Activated CD8-positive, alpha-beta memory T cell treated with anti-CD3 and anti-CD28 coated beads, Interleukin-2, amount 10 ng/mL, durations not matched to agents 7 days and 5 days (primary cell): ENCODE measurements at regions of chr14 and their contacts with region 1.

Region 1: GRCh38 chr14:97978341-97978740 is 1181.2 kb downstream of the VRK1 start:
- DNase-seq: peak; percentile 88
- ATAC-seq: peak; percentile 89
- H3K4me3 Mint-ChIP-seq: peak overlapping the region; percentile 84
- H3K27ac Mint-ChIP-seq: peak overlapping the region; percentile 95
- H3K4me1 Mint-ChIP-seq: peaks cover 48% of the 10 kb centered on the region
- H3K27me3 Mint-ChIP-seq: no peaks in the 10 kb centered on the region

Region 2: GRCh38 chr14:97707603-97708002 is 270.7 kb before region 1 on chr14:
- CTCF ChIA-PET with region 1: interaction called, 23 read pairs
- DNase-seq: peak; percentile 80
- ATAC-seq: peak; percentile 63
- H3K4me3 Mint-ChIP-seq: peak overlapping the region; percentile 48
- H3K27ac Mint-ChIP-seq: peak overlapping the region; percentile 94
- H3K4me1 Mint-ChIP-seq: peaks cover 88% of the 10 kb centered on the region
- H3K27me3 Mint-ChIP-seq: no peaks in the 10 kb centered on the region

Region 3: GRCh38 chr14:97930166-97930565 is 48.2 kb before region 1 on chr14:
- CTCF ChIA-PET with region 1: no interaction called
- DNase-seq: no peak
- ATAC-seq: no peak
- H3K4me3 Mint-ChIP-seq: no peak overlapping the region
- H3K27ac Mint-ChIP-seq: no peak overlapping the region
- H3K4me1 Mint-ChIP-seq: peaks cover 23% of the 10 kb centered on the region
- H3K27me3 Mint-ChIP-seq: peaks cover 14% of the 10 kb centered on the region

Region 4: GRCh38 chr14:97995531-97995930 is 17.2 kb after region 1 on chr14:
- CTCF ChIA-PET with region 1: interaction called, 12 read pairs
- DNase-seq: no peak
- ATAC-seq: no peak
- H3K4me3 Mint-ChIP-seq: no peak overlapping the region
- H3K27ac Mint-ChIP-seq: peak overlapping the region; percentile 98
- H3K4me1 Mint-ChIP-seq: peaks cover 31% of the 10 kb centered on the region
- H3K27me3 Mint-ChIP-seq: no peaks in the 10 kb centered on the region

Region 5: GRCh38 chr14:98006008-98006407 is 27.7 kb after region 1 on chr14:
- CTCF ChIA-PET with region 1: interaction called, 13 read pairs
- DNase-seq: no peak
- ATAC-seq: no peak
- H3K4me3 Mint-ChIP-seq: no peak overlapping the region
- H3K27ac Mint-ChIP-seq: no peak overlapping the region
- H3K4me1 Mint-ChIP-seq: peaks cover 16% of the 10 kb centered on the region
- H3K27me3 Mint-ChIP-seq: no peaks in the 10 kb centered on the region

Region 6: GRCh38 chr14:98018628-98019027 is 40.3 kb after region 1 on chr14:
- CTCF ChIA-PET with region 1: interaction called, 10 read pairs
- DNase-seq: peak; percentile 73
- ATAC-seq: peak; percentile 86
- H3K4me3 Mint-ChIP-seq: no peak overlapping the region
- H3K27ac Mint-ChIP-seq: peak overlapping the region; percentile 74
- H3K4me1 Mint-ChIP-seq: peaks cover 43% of the 10 kb centered on the region
- H3K27me3 Mint-ChIP-seq: no peaks in the 10 kb centered on the region

Region 7: GRCh38 chr14:98059106-98059505 is 80.8 kb after region 1 on chr14:
- CTCF ChIA-PET with region 1: no interaction called
- DNase-seq: no peak
- ATAC-seq: no peak
- H3K4me3 Mint-ChIP-seq: no peak overlapping the region
- H3K27ac Mint-ChIP-seq: no peak overlapping the region
- H3K4me1 Mint-ChIP-seq: no peaks in the 10 kb centered on the region
- H3K27me3 Mint-ChIP-seq: no peaks in the 10 kb centered on the region

Region 8: GRCh38 chr14:98138666-98139065 is 160.3 kb after region 1 on chr14:
- CTCF ChIA-PET with region 1: interaction called, 46 read pairs
- DNase-seq: peak; percentile 76
- ATAC-seq: peak; percentile 82
- H3K4me3 Mint-ChIP-seq: peak overlapping the region; percentile 7
- H3K27ac Mint-ChIP-seq: peak overlapping the region; percentile 53
- H3K4me1 Mint-ChIP-seq: peaks cover 65% of the 10 kb centered on the region
- H3K27me3 Mint-ChIP-seq: no peaks in the 10 kb centered on the region

Region 9: GRCh38 chr14:99271951-99272631 is 1293.8 kb after region 1 on chr14 and contains the start of gene BCL11B:
- CTCF ChIA-PET with region 1: interaction called, 22 read pairs
- DNase-seq: peak; percentile 96
- ATAC-seq: peak; percentile 71
- H3K4me3 Mint-ChIP-seq: peak within 1 kb of the TSS; percentile 96
- H3K27ac Mint-ChIP-seq: peak within 1 kb of the TSS; percentile 99
- H3K4me1 Mint-ChIP-seq: peaks cover 26% of the 10 kb centered on the region
- H3K27me3 Mint-ChIP-seq: peaks cover 13% of the 10 kb centered on the region
- total RNA-seq, gene BCL11B: 53.0 to 66.2 TPM